ENCODE measurements at regions of chr11 and their contacts with region 1.

Region 1: GRCh38 chr11:95089620-95090542 is at the start of gene ENDOD1:
- DNase-seq: peak; percentile 89
- ATAC-seq: peak; percentile 94
- H3K4me3 Mint-ChIP-seq: peak within 1 kb of the TSS; percentile 89
- H3K27ac Mint-ChIP-seq: peak within 1 kb of the TSS; percentile 99
- H3K4me1 Mint-ChIP-seq: peaks cover 67% of the 10 kb centered on the region
- H3K27me3 Mint-ChIP-seq: no peaks in the 10 kb centered on the region
- total RNA-seq, gene ENDOD1: 37.1 to 40.5 TPM

Region 2: DNA sequence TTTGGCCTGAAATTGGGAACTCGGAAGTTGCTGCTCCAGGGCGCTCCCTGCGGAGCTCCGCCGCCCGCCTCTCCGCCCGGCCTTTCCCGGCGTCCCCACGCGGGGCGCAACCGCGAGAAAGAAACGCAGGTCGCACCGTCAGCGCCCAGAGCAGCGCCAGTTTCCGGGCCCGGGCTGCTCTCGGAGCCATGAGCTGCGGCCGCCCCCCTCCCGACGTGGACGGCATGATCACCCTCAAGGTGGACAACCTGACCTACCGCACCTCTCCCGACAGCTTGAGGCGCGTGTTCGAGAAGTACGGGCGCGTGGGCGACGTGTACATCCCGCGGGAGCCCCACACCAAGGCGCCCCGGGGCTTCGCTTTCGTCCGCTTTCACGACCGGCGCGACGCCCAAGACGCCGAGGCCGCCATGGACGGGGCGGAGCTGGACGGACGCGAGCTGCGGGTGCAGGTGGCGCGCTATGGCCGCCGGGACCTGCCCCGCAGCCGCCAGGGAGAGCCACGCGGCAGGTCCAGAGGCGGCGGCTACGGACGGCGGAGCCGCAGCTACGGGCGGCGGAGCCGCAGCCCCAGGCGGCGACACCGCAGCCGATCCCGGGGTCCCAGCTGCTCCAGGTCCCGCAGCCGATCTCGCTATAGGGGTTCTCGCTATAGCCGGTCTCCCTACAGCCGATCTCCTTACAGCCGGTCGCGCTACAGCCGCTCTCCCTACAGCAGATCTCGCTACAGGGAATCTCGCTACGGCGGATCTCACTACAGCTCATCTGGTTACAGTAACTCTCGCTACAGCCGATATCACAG is 22.6 kb before region 1 on chr11:
- CTCF ChIA-PET with region 1: interaction called, 321 read pairs
- DNase-seq: peak; percentile 82
- ATAC-seq: peak; percentile 69
- H3K4me3 Mint-ChIP-seq: peak overlapping the region; percentile 92
- H3K27ac Mint-ChIP-seq: peak overlapping the region; percentile 93
- H3K4me1 Mint-ChIP-seq: peaks cover 22% of the 10 kb centered on the region
- H3K27me3 Mint-ChIP-seq: peaks cover 10% of the 10 kb centered on the region

Region 3: GRCh38 chr11:95100856-95101507 is 11.1 kb after region 1 on chr11:
- CTCF ChIA-PET with region 1: interaction called, 321 read pairs
- DNase-seq: no peak
- ATAC-seq: no peak
- H3K4me3 Mint-ChIP-seq: no peak overlapping the region
- H3K27ac Mint-ChIP-seq: no peak overlapping the region
- H3K4me1 Mint-ChIP-seq: peaks cover 52% of the 10 kb centered on the region
- H3K27me3 Mint-ChIP-seq: no peaks in the 10 kb centered on the region

Region 4: DNA sequence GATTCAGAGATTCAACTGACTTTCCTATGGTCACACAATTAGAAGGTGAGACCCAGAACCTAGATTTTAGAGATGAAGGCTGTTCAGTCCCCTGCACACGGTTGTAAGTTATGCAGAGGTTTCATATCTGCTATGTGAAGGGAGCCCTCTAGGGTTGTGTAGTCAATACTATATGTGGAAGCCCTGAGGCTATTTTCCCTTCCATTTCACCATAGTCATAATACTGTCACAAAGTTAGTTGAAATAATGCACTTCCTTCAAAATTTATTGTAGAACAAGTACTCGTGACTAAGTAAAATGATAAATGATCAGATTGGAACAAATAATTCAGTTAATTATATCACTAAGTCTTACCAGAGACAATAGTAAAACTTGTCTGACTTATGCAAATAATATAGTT is 48.6 kb after region 1 on chr11:
- CTCF ChIA-PET with region 1: interaction called, 13 read pairs
- DNase-seq: no peak
- ATAC-seq: peak; percentile 69
- H3K4me3 Mint-ChIP-seq: no peak overlapping the region
- H3K27ac Mint-ChIP-seq: no peak overlapping the region
- H3K4me1 Mint-ChIP-seq: peaks cover 26% of the 10 kb centered on the region
- H3K27me3 Mint-ChIP-seq: peaks cover 4% of the 10 kb centered on the region